CD8-positive, alpha-beta T cell (primary cell): ENCODE measurements at regions of chr17 and their contacts with region 1.

Region 1: GRCh38 chr17:41688699-41689496 is at the start of gene EIF1:
- DNase-seq: peak; percentile 99 to 100 (median 100)
- ATAC-seq: peak; percentile 76
- H3K4me3 ChIP-seq: peak within 1 kb of the TSS; percentile 65 to 89
- H3K4me3 Mint-ChIP-seq: peak within 1 kb of the TSS; percentile 95
- H3K27ac ChIP-seq: peak within 1 kb of the TSS; percentile 93 to 100
- H3K27ac Mint-ChIP-seq: peak within 1 kb of the TSS; percentile 99
- H3K4me1 ChIP-seq: peaks cover 31% of the 10 kb centered on the region
- H3K4me1 Mint-ChIP-seq: peaks cover 36% of the 10 kb centered on the region
- H3K27me3 ChIP-seq: no peaks in the 10 kb centered on the region
- H3K27me3 Mint-ChIP-seq: no peaks in the 10 kb centered on the region
- CTCF ChIP-seq: no peak
- total RNA-seq, gene EIF1: 3,749 to 3,996 TPM

Region 2: DNA sequence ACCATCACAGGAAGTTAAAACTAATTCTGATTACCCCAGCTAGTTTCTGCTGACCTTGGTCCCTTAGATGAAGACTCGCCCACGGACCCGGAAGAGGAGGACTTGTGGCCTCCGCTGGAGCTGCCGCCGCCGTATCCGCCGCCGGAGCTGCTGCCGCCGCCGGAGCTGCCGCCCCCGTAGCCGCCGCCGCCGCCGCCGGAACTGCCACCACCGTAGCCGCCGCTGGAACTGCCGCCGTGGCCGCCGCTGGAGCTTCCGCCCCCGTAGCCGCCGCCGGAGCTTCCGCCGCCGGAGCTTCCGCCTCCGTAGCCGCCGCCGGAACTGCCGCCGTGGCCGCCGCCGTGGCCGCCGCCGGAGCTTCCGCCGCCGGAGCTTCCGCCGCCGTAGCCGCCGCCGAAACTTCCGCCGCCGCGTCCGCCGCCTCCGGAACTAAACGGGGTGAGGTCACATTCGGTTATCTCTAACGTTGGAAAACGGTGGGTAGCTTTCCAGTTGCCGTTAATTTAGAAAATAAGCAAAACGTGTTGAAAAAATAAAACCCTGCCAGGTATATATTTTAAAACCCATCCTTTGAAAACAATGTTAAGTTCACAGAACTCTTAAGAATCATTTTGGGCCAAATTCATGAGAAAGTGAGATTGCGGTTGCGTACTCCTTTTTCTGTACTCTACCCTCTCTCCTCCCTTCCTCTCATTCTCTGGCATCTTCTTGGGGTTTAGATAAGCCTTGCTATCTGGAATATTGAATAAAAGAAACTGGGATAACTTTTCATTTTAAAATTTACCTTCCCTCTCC is 870.0 kb before region 1 on chr17:
- CTCF ChIA-PET with region 1: no interaction called
- POLR2A ChIA-PET with region 1: interaction called, 8 read pairs
- intact Hi-C with region 1: loop called (anchors 2 kb)
- DNase-seq: peak; percentile 70 to 94 (median 85)
- ATAC-seq: peak; percentile 76
- H3K4me3 ChIP-seq: peak overlapping the region; percentile 69 to 77
- H3K4me3 Mint-ChIP-seq: peak overlapping the region; percentile 91
- H3K27ac ChIP-seq: peak overlapping the region; percentile 70 to 79
- H3K27ac Mint-ChIP-seq: peak overlapping the region; percentile 95
- H3K4me1 ChIP-seq: peaks cover 17% of the 10 kb centered on the region
- H3K4me1 Mint-ChIP-seq: peaks cover 26% of the 10 kb centered on the region
- H3K27me3 ChIP-seq: peaks cover 0 to 3% of the 10 kb centered on the region in 2 experiments
- H3K27me3 Mint-ChIP-seq: peaks cover 10% of the 10 kb centered on the region
- CTCF ChIP-seq: no peak

Region 3: DNA sequence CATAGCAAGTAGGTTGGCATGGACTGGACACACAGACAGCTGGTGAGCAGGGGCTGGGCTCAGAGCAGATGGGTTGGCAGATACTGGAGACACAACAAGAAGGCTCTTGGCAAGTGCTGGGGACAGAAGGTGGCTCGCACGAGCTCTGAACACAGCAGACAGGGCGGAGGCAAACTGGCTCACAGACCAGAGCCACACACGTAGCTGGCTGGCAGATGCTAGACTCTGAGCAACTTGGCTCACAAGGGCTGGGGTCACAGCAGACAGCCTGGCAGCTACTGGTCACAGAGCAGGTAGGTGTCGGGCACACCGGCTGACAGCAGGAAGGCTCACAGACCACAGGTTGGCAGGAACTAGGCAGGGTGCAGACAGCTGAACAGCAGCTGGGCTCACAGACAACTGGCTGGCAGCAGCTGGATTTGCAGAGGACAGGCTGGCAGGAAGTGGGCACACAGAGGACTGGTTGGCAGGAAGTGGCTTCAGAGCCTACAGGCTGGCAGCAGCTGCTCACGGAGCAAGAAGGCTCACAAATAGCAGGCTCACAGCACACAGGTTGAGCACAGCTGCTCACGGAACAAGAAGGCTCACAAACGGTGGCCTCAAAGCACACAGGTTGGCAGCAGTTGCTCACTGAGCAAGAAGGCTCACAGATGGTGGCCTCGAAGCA is 380.5 kb before region 1 on chr17:
- CTCF ChIA-PET with region 1: no interaction called
- POLR2A ChIA-PET with region 1: interaction called, 10 read pairs
- intact Hi-C with region 1: no loop called
- DNase-seq: peak; percentile 75 to 95 (median 84)
- ATAC-seq: peak; percentile 82
- H3K4me3 ChIP-seq: peak overlapping the region; percentile 4 to 25
- H3K4me3 Mint-ChIP-seq: peak overlapping the region; percentile 56
- H3K27ac ChIP-seq: peak overlapping the region; percentile 79 to 80
- H3K27ac Mint-ChIP-seq: peak overlapping the region; percentile 98
- H3K4me1 ChIP-seq: peaks cover 48% of the 10 kb centered on the region
- H3K4me1 Mint-ChIP-seq: peaks cover 62% of the 10 kb centered on the region
- H3K27me3 ChIP-seq: no peaks in the 10 kb centered on the region
- H3K27me3 Mint-ChIP-seq: no peaks in the 10 kb centered on the region
- CTCF ChIP-seq: no peak

Region 4: GRCh38 chr17:41338961-41339485 is 349.9 kb before region 1 on chr17:
- CTCF ChIA-PET with region 1: no interaction called
- POLR2A ChIA-PET with region 1: interaction called, 10 read pairs
- intact Hi-C with region 1: no loop called
- DNase-seq: peak in 5 of 9 experiments; percentile 38 to 94 (median 68)
- ATAC-seq: peak; percentile 82
- H3K4me3 ChIP-seq: peak overlapping the region in 1 of 2 experiments; percentile 2
- H3K4me3 Mint-ChIP-seq: peak overlapping the region; percentile 63
- H3K27ac ChIP-seq: peak overlapping the region; percentile 58 to 63
- H3K27ac Mint-ChIP-seq: peak overlapping the region; percentile 98
- H3K4me1 ChIP-seq: peaks cover 85% of the 10 kb centered on the region
- H3K4me1 Mint-ChIP-seq: peaks cover 90% of the 10 kb centered on the region
- H3K27me3 ChIP-seq: no peaks in the 10 kb centered on the region
- H3K27me3 Mint-ChIP-seq: no peaks in the 10 kb centered on the region
- CTCF ChIP-seq: no peak

Region 5: DNA sequence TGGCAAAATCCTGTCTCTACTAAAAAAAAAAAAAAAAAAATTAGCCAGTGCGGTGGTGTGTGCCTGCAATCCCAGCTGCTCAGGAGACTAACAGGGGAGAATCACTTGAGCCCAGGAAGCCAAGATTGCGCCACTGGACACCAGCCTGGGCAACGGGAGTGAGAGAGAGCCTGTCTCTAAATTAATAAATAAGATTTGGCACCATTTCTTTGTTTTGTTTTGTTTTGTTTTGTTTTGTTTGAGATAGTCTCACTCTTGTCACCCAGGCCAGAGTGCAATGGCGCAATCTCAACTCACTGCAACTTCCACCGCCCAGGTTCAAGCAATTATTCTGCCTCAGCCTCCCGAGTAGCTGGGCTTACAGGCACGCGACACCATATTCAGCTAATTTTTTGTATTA is 13.8 kb after region 1 on chr17:
- CTCF ChIA-PET with region 1: interaction called, 4 read pairs
- POLR2A ChIA-PET with region 1: interaction called, 19 read pairs
- intact Hi-C with region 1: no loop called
- DNase-seq: peak in 1 of 9 experiments; percentile 0
- ATAC-seq: no peak
- H3K4me3 ChIP-seq: no peak overlapping the region
- H3K4me3 Mint-ChIP-seq: no peak overlapping the region
- H3K27ac ChIP-seq: no peak overlapping the region
- H3K27ac Mint-ChIP-seq: no peak overlapping the region
- H3K4me1 ChIP-seq: no peaks in the 10 kb centered on the region
- H3K4me1 Mint-ChIP-seq: peaks cover 6% of the 10 kb centered on the region
- H3K27me3 ChIP-seq: no peaks in the 10 kb centered on the region
- H3K27me3 Mint-ChIP-seq: no peaks in the 10 kb centered on the region
- CTCF ChIP-seq: no peak

Region 6: DNA sequence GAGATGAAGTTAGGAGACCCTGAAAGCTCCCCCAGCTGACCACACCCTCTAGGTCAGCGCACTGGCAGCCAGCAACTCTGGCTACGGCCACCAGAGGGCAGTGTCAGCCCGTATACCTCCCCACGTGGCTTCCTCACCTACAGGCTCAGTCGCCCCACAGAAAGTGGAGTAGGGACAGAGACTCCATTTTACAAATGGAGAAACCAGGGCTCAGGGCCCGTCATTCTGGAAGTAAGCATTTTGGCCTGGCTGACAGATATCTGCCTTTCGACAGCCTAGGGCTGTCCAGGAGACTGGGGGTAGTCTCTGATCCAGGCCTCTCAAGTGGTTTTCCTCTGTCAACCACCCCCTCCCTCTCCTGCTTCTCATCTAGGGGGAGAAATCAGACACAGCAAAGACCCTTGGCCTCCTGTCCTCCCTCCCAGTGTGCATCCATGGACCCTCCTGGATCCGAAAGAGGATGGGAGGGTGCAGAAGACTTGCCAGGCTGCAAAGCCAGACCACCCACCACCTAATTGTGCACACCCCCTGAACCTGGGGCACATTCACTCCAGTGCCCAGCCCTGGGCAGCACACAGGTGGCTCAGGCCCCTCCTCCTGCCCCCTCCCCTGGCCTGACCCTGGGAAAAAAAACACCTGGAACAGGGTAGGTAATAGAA is 49.3 kb after region 1 on chr17:
- CTCF ChIA-PET with region 1: no interaction called
- POLR2A ChIA-PET with region 1: no interaction called
- intact Hi-C with region 1: no loop called
- DNase-seq: peak; percentile 57 to 87 (median 77)
- ATAC-seq: peak; percentile 97
- H3K4me3 ChIP-seq: no peak overlapping the region
- H3K4me3 Mint-ChIP-seq: no peak overlapping the region
- H3K27ac ChIP-seq: no peak overlapping the region
- H3K27ac Mint-ChIP-seq: no peak overlapping the region
- H3K4me1 ChIP-seq: peaks cover 10% of the 10 kb centered on the region
- H3K4me1 Mint-ChIP-seq: peaks cover 5% of the 10 kb centered on the region
- H3K27me3 ChIP-seq: peaks cover 9 to 31% of the 10 kb centered on the region in 2 experiments
- H3K27me3 Mint-ChIP-seq: peaks cover 27% of the 10 kb centered on the region
- CTCF ChIP-seq: peak; percentile 98

Region 7: GRCh38 chr17:41811549-41812380 is 122.9 kb after region 1 on chr17 and contains the start of gene P3H4:
- CTCF ChIA-PET with region 1: no interaction called
- POLR2A ChIA-PET with region 1: interaction called, 18 read pairs
- intact Hi-C with region 1: loop called in 1 of 2 experiments (anchors 2 kb)
- DNase-seq: peak; percentile 51 to 89 (median 75)
- ATAC-seq: peak; percentile 87
- H3K4me3 ChIP-seq: peak within 1 kb of the TSS; percentile 73 to 93
- H3K4me3 Mint-ChIP-seq: peak within 1 kb of the TSS; percentile 93
- H3K27ac ChIP-seq: peak within 1 kb of the TSS in 1 of 2 experiments; percentile 35
- H3K27ac Mint-ChIP-seq: peak within 1 kb of the TSS; percentile 55
- H3K4me1 ChIP-seq: peaks cover 26% of the 10 kb centered on the region
- H3K4me1 Mint-ChIP-seq: peaks cover 23% of the 10 kb centered on the region
- H3K27me3 ChIP-seq: no peaks in the 10 kb centered on the region
- H3K27me3 Mint-ChIP-seq: peaks cover 2% of the 10 kb centered on the region
- CTCF ChIP-seq: peak; percentile 51
- total RNA-seq, gene P3H4: 0.89 to 1.0 TPM

Region 8: GRCh38 chr17:41918314-41919164 is 229.6 kb after region 1 on chr17 and contains the start of gene ACLY:
- CTCF ChIA-PET with region 1: no interaction called
- POLR2A ChIA-PET with region 1: interaction called, 11 read pairs
- intact Hi-C with region 1: no loop called
- DNase-seq: peak; percentile 89 to 97 (median 95)
- ATAC-seq: peak; percentile 99
- H3K4me3 ChIP-seq: peak within 1 kb of the TSS; percentile 94 to 100
- H3K4me3 Mint-ChIP-seq: peak within 1 kb of the TSS; percentile 90
- H3K27ac ChIP-seq: peak within 1 kb of the TSS; percentile 82 to 86
- H3K27ac Mint-ChIP-seq: peak within 1 kb of the TSS; percentile 81
- H3K4me1 ChIP-seq: peaks cover 17% of the 10 kb centered on the region
- H3K4me1 Mint-ChIP-seq: peaks cover 32% of the 10 kb centered on the region
- H3K27me3 ChIP-seq: no peaks in the 10 kb centered on the region
- H3K27me3 Mint-ChIP-seq: no peaks in the 10 kb centered on the region
- CTCF ChIP-seq: no peak
- total RNA-seq, gene ACLY: 24.9 to 25.0 TPM